Activated naive CD4-positive, alpha-beta T cell treated with anti-CD3 and anti-CD28 coated beads for 36 hours (primary cell): ENCODE measurements at regions of chr1 and their contacts with region 1.

Region 1: GRCh38 chr1:156445789-156446263 is 54.7 kb downstream of the MEF2D start:
- DNase-seq: peak; percentile 93
- H3K4me3 Mint-ChIP-seq: no peak overlapping the region
- H3K27ac Mint-ChIP-seq: peak overlapping the region; percentile 22
- H3K4me1 Mint-ChIP-seq: peaks cover 21% of the 10 kb centered on the region
- H3K27me3 Mint-ChIP-seq: peaks cover 28% of the 10 kb centered on the region

Region 2: DNA sequence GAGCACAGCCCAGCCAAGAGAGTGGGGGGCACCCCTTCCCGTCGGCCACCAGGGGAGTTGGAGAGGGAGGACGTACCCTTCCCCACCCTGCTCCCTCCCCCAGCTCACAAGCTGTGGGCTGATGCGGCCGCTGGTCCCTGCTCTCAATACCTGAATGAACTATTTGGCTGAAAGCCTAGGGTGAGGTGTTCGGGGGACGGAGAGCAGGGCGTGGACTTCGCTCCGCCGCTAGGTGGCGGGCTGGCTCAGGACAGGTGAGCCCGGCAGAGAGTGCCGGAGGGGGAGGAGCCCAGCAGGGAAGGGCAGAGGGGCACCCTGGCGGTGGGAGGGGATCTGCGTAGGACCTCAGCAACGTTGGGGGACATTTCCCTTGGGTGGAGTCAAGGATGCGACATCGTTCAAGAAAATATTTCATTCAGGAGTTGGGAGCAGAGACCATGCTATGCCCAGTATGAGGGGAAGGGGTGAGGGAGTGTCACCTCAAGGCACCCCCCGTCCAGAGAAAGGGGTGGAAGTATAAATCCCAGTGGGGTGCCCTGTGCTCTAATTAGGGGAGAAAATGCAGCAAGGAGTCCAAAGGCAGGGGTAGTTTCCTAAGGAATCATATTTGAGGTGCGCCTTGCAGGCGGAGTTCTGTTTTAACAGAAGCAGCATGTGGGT is 88.8 kb before region 1 on chr1:
- CTCF ChIA-PET with region 1: interaction called, 20 read pairs
- intact Hi-C with region 1: loop called (anchors 1 kb)
- DNase-seq: peak; percentile 66
- H3K4me3 Mint-ChIP-seq: no peak overlapping the region
- H3K27ac Mint-ChIP-seq: no peak overlapping the region
- H3K4me1 Mint-ChIP-seq: peaks cover 15% of the 10 kb centered on the region
- H3K27me3 Mint-ChIP-seq: peaks cover 21% of the 10 kb centered on the region

Region 3: DNA sequence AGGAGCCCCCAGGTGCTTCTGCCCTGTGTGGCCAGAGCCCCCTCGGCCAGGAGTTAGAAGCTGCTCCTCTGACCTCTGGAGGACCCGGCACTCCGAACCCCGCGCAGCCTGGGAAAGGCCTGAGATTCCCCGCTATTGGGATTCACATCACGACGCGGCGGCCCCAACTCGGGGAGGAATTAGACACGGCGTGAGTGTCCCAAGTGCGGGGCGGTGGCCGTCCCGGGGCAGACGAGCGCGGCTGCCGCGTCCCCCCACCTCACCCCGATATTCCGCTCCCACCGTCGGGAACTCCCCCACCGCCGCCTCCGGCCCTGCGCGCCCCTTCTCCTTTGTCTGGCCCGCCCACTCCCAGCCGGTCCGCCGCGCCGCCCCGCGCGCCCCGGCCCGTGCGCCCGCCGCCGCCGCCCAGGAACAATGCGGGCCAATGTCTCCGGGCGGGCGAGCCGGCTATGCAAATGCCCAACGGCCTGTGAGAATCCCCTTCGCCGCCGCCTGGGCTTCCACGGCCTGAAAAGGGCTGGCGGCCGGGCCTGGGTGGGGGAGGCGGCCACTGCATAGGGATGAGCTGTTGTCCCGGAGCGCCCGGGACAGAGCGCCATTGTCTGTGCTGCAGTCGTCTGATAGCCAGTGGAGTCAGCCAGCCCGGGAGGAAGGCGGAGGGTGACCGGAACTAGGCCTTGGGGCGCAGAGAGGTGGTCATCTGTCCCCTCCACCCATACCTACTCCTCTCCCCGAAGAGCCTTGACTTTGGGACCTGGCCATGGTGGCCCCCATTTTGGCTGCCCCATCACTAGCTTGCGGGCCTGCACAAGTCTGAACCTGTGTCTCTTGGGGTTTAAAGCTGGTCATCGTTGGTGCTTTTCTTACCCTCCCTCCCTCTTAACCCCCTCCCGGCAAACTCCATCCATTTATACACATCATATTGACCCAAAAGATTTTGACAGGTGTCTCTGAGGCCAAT is 57.4 kb before region 1 on chr1:
- CTCF ChIA-PET with region 1: interaction called, 348 read pairs
- intact Hi-C with region 1: loop called (anchors 1 kb)
- DNase-seq: no peak
- H3K4me3 Mint-ChIP-seq: no peak overlapping the region
- H3K27ac Mint-ChIP-seq: no peak overlapping the region
- H3K4me1 Mint-ChIP-seq: peaks cover 4% of the 10 kb centered on the region
- H3K27me3 Mint-ChIP-seq: peaks cover 41% of the 10 kb centered on the region

Region 4: DNA sequence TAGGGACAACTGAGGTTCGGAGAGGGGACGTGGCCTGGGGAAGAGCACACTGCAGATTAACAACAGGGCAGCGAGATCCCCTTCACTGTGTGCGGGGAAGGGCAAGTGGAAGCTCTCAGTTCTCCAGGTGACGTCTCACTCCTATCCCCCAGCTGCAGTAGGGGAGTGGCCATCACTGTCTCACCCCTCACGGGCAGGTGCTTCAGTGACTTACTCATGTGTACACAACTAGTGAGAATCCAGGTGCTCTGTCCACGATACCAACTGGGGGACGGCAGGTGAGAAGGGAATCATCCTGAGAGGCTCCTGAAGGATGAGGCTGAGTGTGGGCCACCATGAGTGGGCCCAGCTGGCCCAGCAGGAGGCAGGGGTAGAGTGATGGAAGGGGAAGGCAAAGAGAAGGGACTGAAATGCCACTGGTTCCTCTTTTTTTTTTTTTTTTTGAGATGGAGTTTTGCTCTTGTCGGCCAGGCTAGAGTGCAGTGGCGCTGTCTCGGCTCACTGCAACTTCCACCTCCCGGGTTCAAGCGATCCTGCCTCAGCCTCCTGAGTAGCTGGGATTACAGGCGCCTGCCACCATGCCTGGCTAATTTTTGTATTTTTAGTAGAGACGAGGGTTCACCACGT is 50.9 kb before region 1 on chr1:
- CTCF ChIA-PET with region 1: interaction called, 20 read pairs
- intact Hi-C with region 1: no loop called
- DNase-seq: no peak
- H3K4me3 Mint-ChIP-seq: no peak overlapping the region
- H3K27ac Mint-ChIP-seq: no peak overlapping the region
- H3K4me1 Mint-ChIP-seq: no peaks in the 10 kb centered on the region
- H3K27me3 Mint-ChIP-seq: peaks cover 7% of the 10 kb centered on the region

Region 5: GRCh38 chr1:156421062-156421938 is 24.5 kb before region 1 on chr1:
- CTCF ChIA-PET with region 1: interaction called, 18 read pairs
- intact Hi-C with region 1: no loop called
- DNase-seq: peak; percentile 86
- H3K4me3 Mint-ChIP-seq: peak overlapping the region; percentile 70
- H3K27ac Mint-ChIP-seq: no peak overlapping the region
- H3K4me1 Mint-ChIP-seq: peaks cover 19% of the 10 kb centered on the region
- H3K27me3 Mint-ChIP-seq: peaks cover 80% of the 10 kb centered on the region

Region 6: DNA sequence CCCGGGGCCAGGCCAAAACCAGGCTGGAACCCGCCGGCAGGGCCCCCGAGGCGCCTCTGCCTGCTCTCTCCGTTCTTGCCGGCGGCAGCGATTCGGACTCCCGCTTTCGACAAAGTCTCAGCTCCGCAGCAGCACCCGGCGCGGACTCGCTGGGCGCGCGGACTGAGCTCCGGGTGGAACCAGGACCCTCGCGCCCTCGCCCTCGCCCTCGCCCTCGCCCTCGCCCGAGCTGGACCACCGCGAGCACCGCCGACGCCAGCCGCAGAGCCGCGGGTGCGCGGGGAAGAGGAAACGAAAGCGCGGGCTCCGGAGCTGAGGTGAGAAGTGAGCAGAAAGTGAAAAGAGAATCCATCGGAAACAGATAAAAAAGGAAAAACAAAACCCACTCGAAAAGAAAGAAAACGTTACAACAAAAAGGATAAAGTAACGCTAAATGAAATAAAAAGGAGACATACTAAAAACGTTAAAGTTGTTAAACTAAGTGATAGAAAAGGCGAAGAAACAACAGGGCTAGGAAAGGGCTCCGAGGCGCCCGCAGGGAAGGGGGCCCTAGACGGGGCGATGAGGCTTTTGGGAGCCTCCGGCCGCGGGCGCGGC is 10.2 kb before region 1 on chr1:
- CTCF ChIA-PET with region 1: interaction called, 26 read pairs
- intact Hi-C with region 1: loop called (anchors 1 kb)
- DNase-seq: peak; percentile 46
- H3K4me3 Mint-ChIP-seq: peak overlapping the region; percentile 73
- H3K27ac Mint-ChIP-seq: no peak overlapping the region
- H3K4me1 Mint-ChIP-seq: peaks cover 42% of the 10 kb centered on the region
- H3K27me3 Mint-ChIP-seq: peaks cover 78% of the 10 kb centered on the region

Region 7: DNA sequence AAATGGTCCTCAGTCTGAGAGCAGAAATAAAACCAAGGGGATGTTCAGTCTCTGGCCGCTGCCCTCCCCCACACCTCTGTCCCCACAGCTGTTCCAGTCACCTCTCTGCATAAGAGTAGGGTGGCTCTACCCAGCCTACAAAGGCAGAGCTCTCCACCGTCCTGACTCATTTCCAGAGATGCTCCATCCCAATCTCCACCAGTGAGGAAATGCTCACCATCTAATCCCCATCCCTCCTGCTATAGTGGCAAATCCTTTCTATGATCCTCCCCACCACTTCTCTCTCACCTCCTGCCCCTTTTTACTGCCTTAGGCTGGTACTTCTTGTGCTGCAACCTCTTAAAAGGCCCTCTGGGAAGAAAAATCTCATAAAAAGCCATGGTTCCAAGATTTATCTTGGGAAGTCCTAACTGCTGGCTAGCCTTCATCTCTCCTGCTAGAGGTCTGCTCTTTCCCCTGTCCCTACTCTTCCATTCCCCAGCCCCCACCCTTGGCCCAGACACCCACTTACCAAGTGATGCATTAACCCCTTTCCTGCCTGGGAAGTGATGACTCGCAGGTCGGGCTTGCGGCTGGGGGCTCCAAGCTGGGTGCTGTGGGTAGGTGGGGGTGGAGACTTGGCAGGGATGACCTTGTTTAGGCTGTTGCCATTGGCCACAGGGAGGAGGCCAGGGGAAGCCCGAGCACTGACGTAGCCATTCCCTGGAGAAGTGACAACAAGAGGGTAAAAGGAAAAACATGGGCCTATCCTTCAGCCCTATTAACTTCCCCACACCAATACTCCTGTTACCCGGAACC is 30.9 kb after region 1 on chr1:
- CTCF ChIA-PET with region 1: no interaction called
- intact Hi-C with region 1: no loop called
- DNase-seq: no peak
- H3K4me3 Mint-ChIP-seq: no peak overlapping the region
- H3K27ac Mint-ChIP-seq: peak overlapping the region; percentile 4
- H3K4me1 Mint-ChIP-seq: peaks cover 29% of the 10 kb centered on the region
- H3K27me3 Mint-ChIP-seq: no peaks in the 10 kb centered on the region

Region 8: DNA sequence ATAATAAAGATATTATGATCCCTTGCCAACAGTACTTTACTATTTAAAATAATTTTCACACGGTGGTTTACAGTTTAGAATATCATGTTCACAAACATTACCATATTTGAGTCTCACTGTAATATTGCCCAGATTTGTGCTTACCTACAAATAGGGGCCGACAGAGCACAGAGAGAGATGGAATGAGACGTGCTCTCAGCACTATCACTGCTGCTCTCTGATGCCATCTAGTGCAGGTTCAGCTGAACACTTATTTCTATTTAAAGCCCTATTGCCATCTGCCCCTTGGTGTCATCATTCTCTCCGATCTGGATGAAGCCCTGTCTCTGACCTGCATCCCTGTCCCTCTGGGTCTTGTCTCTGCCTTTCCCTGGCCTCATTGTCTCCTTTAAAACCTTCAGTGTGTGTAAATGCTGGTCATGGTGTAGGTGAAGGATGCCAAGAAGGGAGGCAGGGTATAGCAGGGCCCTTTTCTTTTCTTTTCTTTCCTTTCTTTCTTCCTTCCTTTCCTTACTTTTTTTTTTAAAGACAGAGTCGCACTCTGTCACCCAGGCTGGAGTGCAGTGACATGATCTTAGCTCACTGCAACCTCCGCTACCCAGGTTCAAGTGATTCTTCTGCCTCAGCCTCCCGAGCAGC is 162.3 kb after region 1 on chr1:
- CTCF ChIA-PET with region 1: interaction called, 9 read pairs
- intact Hi-C with region 1: loop called (anchors 1 kb)
- DNase-seq: peak; percentile 85
- H3K4me3 Mint-ChIP-seq: no peak overlapping the region
- H3K27ac Mint-ChIP-seq: no peak overlapping the region
- H3K4me1 Mint-ChIP-seq: peaks cover 10% of the 10 kb centered on the region
- H3K27me3 Mint-ChIP-seq: peaks cover 2% of the 10 kb centered on the region